Posterior vena cava (tissue), 2 donors: ENCODE measurements at regions of chr1 and their contacts with region 1.

Region 1: DNA sequence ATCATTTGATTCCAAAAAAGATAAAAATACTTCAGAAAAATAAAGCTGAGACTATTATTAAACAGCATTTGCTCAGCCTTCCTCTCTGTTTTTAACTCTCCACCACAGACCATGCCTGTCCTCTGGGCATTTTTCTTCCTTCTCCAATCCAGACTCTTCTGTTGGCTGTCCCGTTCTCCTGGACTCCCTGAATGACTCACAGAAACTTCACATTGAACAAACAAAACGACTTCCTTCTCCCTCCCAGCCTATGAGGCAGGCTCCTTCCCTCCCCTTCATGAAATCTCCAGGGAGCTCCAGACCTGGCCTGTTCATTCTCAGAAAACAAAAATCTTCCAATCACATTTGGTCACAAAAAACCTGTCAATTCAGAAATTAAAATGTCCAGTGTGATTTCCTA is 421.3 kb downstream of the NPHP4 start:
- DNase-seq: no peak

Region 2: GRCh38 chr1:5688081-5689077 is 117.5 kb after region 1 on chr1:
- intact Hi-C with region 1: no loop called
- DNase-seq: no peak

Region 3: GRCh38 chr1:5751833-5752745 is 181.2 kb after region 1 on chr1:
- intact Hi-C with region 1: no loop called
- DNase-seq: peak; percentile 68

Region 4: GRCh38 chr1:6037338-6037762 is 466.4 kb after region 1 on chr1:
- intact Hi-C with region 1: loop called in 1 of 2 experiments (anchors 5 kb)
- DNase-seq: no peak